GM12878 (cell line): ENCODE measurements at regions of chr1 and their contacts with region 1.

Region 1: DNA sequence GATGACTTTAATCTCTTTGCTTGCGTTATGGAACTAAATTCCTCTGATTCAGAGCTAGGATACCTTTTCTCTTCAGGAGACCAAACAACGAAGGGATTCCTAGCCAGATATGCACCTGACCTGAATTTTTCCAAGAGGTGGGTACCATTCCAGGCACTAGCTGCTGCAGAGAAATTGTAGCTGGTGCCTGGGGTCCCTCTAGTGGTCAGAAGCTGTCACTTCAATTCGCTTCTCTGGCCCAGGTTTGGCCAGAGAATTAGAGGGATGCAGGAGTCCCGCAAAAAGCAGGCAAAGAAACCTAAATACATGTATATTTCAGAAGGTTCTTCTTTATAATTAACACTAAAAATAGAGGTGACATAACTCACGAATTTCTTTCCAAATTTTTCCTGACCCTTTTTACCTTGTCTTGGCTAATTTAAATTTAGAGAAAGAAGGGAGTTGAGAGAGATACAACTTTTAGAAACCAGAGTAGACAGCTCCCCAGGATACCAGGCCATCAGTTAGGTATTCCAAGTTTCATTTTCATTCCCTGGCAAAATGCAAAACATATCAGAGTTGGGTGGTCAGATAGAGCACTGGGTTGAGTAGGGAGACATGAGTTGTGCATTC is 9.6 kb downstream of the ACKR1 start:
- DNase-seq: no peak
- ATAC-seq: peak; percentile 81
- H3K4me3 ChIP-seq: no peak overlapping the region
- H3K27ac ChIP-seq: no peak overlapping the region
- H3K4me1 ChIP-seq: no peaks in the 10 kb centered on the region; the same call in 1 of the 2 replicates
- H3K27me3 ChIP-seq: peaks cover 1 to 6% of the 10 kb centered on the region in 2 experiments
- CTCF ChIP-seq: peak; percentile 86 to 88 (median 88)
- EP300 ChIP-seq: no peak
- POLR2A ChIP-seq: no peak
- RAD21 ChIP-seq: peak; percentile 78

Region 2: GRCh38 chr1:158864595-158864994 is 349.7 kb before region 1 on chr1:
- CTCF ChIA-PET with region 1: no interaction called
- POLR2A ChIA-PET with region 1: no interaction called
- RAD21 ChIA-PET with region 1: no interaction called
- SMC1A ChIA-PET with region 1: no interaction called
- in situ Hi-C with region 1: no loop called
- intact Hi-C with region 1: no loop called
- DNase-seq: no peak
- ATAC-seq: no peak
- H3K4me3 ChIP-seq: no peak overlapping the region
- H3K27ac ChIP-seq: no peak overlapping the region
- H3K4me1 ChIP-seq: no peaks in the 10 kb centered on the region
- H3K27me3 ChIP-seq: peaks cover 0 to 2% of the 10 kb centered on the region in 2 experiments; a peak in 1 of 4 replicates
- CTCF ChIP-seq: no peak
- EP300 ChIP-seq: no peak
- POLR2A ChIP-seq: no peak
- RAD21 ChIP-seq: no peak

Region 3: DNA sequence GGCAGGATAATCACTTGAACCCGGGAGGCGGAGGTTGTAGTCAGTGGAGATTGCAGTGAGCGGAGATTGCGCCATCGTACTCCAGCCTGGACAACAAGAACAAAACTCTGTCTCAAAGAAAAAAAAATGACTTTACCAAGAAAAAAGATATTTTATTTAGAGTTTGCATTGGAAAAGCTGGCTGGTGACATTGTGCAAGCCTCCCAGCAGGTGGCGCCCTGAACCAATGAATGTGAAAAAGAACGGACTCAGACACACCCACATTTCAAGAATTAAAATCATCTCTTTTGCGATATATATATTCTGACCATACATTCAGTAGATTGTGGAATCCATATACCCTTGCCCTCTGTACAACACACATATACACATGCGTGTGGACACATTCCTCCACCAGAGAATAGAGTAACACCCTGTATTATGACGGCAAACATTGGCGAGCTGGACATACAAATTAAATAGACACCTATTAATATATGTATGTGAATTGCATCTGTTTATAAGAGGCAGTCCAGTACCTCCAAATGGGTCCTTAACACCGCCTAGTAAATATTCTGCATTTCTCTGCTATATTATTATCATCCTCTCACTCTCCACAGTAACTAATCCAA is 81.9 kb before region 1 on chr1:
- CTCF ChIA-PET with region 1: interaction called, 236 read pairs
- POLR2A ChIA-PET with region 1: no interaction called
- RAD21 ChIA-PET with region 1: interaction called, 25 read pairs
- SMC1A ChIA-PET with region 1: interaction called, 49 read pairs
- in situ Hi-C with region 1: no loop called
- intact Hi-C with region 1: loop called (anchors 2 kb)
- DNase-seq: no peak
- ATAC-seq: peak; percentile 75
- H3K4me3 ChIP-seq: no peak overlapping the region
- H3K27ac ChIP-seq: no peak overlapping the region
- H3K4me1 ChIP-seq: no peaks in the 10 kb centered on the region
- H3K27me3 ChIP-seq: no peaks in the 10 kb centered on the region
- CTCF ChIP-seq: peak; percentile 79 to 90 (median 87)
- EP300 ChIP-seq: no peak
- POLR2A ChIP-seq: no peak
- RAD21 ChIP-seq: peak; percentile 82

Region 4: GRCh38 chr1:159161001-159161718 is 53.1 kb before region 1 on chr1:
- CTCF ChIA-PET with region 1: interaction called, 116 read pairs
- POLR2A ChIA-PET with region 1: no interaction called
- RAD21 ChIA-PET with region 1: interaction called, 8 read pairs
- SMC1A ChIA-PET with region 1: interaction called, 8 read pairs
- in situ Hi-C with region 1: no loop called
- intact Hi-C with region 1: loop called (anchors 1 kb)
- DNase-seq: peak; percentile 51
- ATAC-seq: peak; percentile 99
- H3K4me3 ChIP-seq: no peak overlapping the region
- H3K27ac ChIP-seq: no peak overlapping the region
- H3K4me1 ChIP-seq: peaks cover 3% of the 10 kb centered on the region; the same call in 1 of the 2 replicates
- H3K27me3 ChIP-seq: peaks cover 0 to 2% of the 10 kb centered on the region in 2 experiments; a peak in 1 of 4 replicates
- CTCF ChIP-seq: peak; percentile 94 to 100 (median 99); a peak in 5 of 6 replicates
- EP300 ChIP-seq: no peak
- POLR2A ChIP-seq: no peak
- RAD21 ChIP-seq: peak; percentile 100

Region 5: GRCh38 chr1:159197561-159198557 is 16.4 kb before region 1 on chr1:
- CTCF ChIA-PET with region 1: interaction called, 83 read pairs
- POLR2A ChIA-PET with region 1: no interaction called
- RAD21 ChIA-PET with region 1: interaction called, 4 read pairs
- SMC1A ChIA-PET with region 1: interaction called, 20 read pairs
- in situ Hi-C with region 1: no loop called
- intact Hi-C with region 1: no loop called
- DNase-seq: no peak
- ATAC-seq: peak; percentile 96
- H3K4me3 ChIP-seq: no peak overlapping the region
- H3K27ac ChIP-seq: no peak overlapping the region
- H3K4me1 ChIP-seq: no peaks in the 10 kb centered on the region
- H3K27me3 ChIP-seq: peaks cover 0 to 2% of the 10 kb centered on the region in 2 experiments; a peak in 2 of 4 replicates
- CTCF ChIP-seq: peak; percentile 83 to 90 (median 88)
- EP300 ChIP-seq: no peak
- POLR2A ChIP-seq: no peak
- RAD21 ChIP-seq: peak; percentile 65

Region 6: GRCh38 chr1:159229486-159229885 is 15.2 kb after region 1 on chr1:
- CTCF ChIA-PET with region 1: interaction called, 17 read pairs
- POLR2A ChIA-PET with region 1: no interaction called
- RAD21 ChIA-PET with region 1: interaction called, 4 read pairs
- SMC1A ChIA-PET with region 1: interaction called, 12 read pairs
- in situ Hi-C with region 1: no loop called
- intact Hi-C with region 1: no loop called
- DNase-seq: no peak
- ATAC-seq: no peak
- H3K4me3 ChIP-seq: no peak overlapping the region
- H3K27ac ChIP-seq: no peak overlapping the region
- H3K4me1 ChIP-seq: no peaks in the 10 kb centered on the region
- H3K27me3 ChIP-seq: no peaks in the 10 kb centered on the region
- CTCF ChIP-seq: no peak
- EP300 ChIP-seq: no peak
- POLR2A ChIP-seq: no peak
- RAD21 ChIP-seq: no peak